ENCODE measurements at regions of chr2 and their contacts with region 1.

Region 1: GRCh38 chr2:99442837-99443236 is 47.0 kb downstream of the REV1 start:
- DNase-seq: no peak
- H3K4me3 ChIP-seq: no peak overlapping the region
- H3K27ac ChIP-seq: no peak overlapping the region
- H3K4me1 ChIP-seq: no peaks in the 10 kb centered on the region
- H3K27me3 ChIP-seq: no peaks in the 10 kb centered on the region
- CTCF ChIP-seq: peak in 1 of 3 experiments; percentile 33

Region 2: GRCh38 chr2:99489761-99490622 is 47.2 kb after region 1 on chr2 and contains the start of gene REV1:
- intact Hi-C with region 1: loop called (anchors 2 kb)
- DNase-seq: peak; percentile 70 to 95
- H3K4me3 ChIP-seq: peak within 1 kb of the TSS; percentile 99 to 100
- H3K27ac ChIP-seq: peak within 1 kb of the TSS; percentile 89 to 99
- H3K4me1 ChIP-seq: peaks cover 0 to 14% of the 10 kb centered on the region in 2 donors
- H3K27me3 ChIP-seq: no peaks in the 10 kb centered on the region
- CTCF ChIP-seq: peak; percentile 74 to 91 (median 80)
- total RNA-seq, gene REV1: 26.8 TPM